ENCODE measurements at regions of chr1 and their contacts with region 1.

Region 1: DNA sequence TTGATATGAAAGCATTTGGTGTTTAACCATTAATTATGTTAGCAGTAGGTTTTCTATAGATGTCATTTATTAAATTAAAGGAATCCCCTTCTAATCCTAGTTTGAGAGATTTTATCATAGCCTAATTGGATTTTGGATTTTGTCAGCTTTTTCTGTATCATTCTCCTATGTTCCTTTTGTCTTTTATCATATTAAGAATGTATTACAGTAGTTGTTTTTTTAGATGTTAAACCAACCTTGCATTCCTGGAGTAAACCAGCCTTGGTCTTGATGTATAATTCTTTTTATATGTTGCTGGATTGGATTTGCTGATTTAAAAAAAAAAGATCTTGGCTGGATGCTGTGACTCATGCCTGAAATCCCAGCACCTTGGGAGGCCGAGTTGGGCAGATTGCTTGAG is 5.6 kb downstream of the SETDB1 start:
- DNase-seq: no peak
- H3K4me3 ChIP-seq: no peak overlapping the region
- H3K27ac ChIP-seq: no peak overlapping the region
- H3K4me1 ChIP-seq: peaks cover 6 to 16% (median 10%) of the 10 kb centered on the region in 4 donors
- H3K27me3 ChIP-seq: no peaks in the 10 kb centered on the region
- CTCF ChIP-seq: no peak
- EP300 ChIP-seq: no peak
- POLR2A ChIP-seq: no peak

Region 2: GRCh38 chr1:150863724-150864123 is 68.0 kb before region 1 on chr1:
- intact Hi-C with region 1: no loop called
- DNase-seq: no peak
- H3K4me3 ChIP-seq: no peak overlapping the region
- H3K27ac ChIP-seq: no peak overlapping the region
- H3K4me1 ChIP-seq: peaks cover 2 to 16% (median 11%) of the 10 kb centered on the region in 4 donors
- H3K27me3 ChIP-seq: no peaks in the 10 kb centered on the region
- CTCF ChIP-seq: no peak
- EP300 ChIP-seq: no peak
- POLR2A ChIP-seq: no peak

Region 3: GRCh38 chr1:150909585-150910180 is 22.1 kb before region 1 on chr1:
- intact Hi-C with region 1: loop called (anchors 2 kb)
- DNase-seq: no peak
- H3K4me3 ChIP-seq: no peak overlapping the region
- H3K27ac ChIP-seq: no peak overlapping the region
- H3K4me1 ChIP-seq: no peaks in the 10 kb centered on the region
- H3K27me3 ChIP-seq: no peaks in the 10 kb centered on the region
- CTCF ChIP-seq: no peak
- EP300 ChIP-seq: no peak
- POLR2A ChIP-seq: no peak

Region 4: GRCh38 chr1:151085953-151086559 is 154.3 kb after region 1 on chr1:
- intact Hi-C with region 1: no loop called
- DNase-seq: no peak
- H3K4me3 ChIP-seq: no peak overlapping the region
- H3K27ac ChIP-seq: no peak overlapping the region
- H3K4me1 ChIP-seq: peaks cover 0 to 5% (median 0%) of the 10 kb centered on the region in 4 donors
- H3K27me3 ChIP-seq: no peaks in the 10 kb centered on the region
- CTCF ChIP-seq: no peak
- EP300 ChIP-seq: no peak
- POLR2A ChIP-seq: no peak

Measured in esophagus muscularis mucosa (tissue), 4 donors.